Activated naive CD4-positive, alpha-beta T cell treated with anti-CD3 and anti-CD28 coated beads for 36 hours (primary cell): ENCODE measurements at regions of chr14 and their contacts with region 1.

Region 1: DNA sequence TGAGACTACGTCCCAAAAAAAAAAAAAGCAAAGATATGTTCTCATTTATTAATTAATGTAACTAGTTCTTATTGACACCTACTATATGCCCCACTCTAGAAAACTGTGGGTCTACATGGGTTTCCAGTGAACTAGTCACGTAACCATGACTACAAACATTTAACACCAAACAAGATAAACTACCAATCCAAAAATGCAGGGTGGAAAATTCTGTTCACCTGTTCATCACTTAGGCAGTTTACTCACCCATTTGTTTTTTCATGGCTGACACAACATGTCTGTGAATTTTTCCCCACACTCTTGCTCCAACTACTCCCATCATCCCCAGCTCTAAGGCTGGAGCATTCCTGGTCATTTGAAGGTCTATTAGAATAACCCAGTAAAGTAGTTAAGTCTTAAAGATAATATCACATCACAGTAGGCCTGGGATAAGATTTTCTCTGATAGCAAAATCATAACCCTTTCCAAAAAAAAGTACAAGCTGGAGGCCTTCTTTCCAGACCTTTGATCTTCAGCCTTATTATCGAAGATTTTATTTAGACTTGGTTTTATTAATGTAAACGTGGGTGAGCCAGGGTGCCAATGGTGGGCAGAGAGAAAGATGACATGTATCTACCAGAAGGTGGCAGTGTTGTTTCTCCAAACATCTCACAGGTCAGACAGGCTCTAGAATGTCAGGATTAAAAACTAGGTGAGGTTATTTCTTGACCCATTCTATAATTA is 61.6 kb upstream of the DAAM1 start:
- DNase-seq: peak; percentile 24
- H3K4me3 Mint-ChIP-seq: no peak overlapping the region
- H3K27ac Mint-ChIP-seq: no peak overlapping the region
- H3K4me1 Mint-ChIP-seq: no peaks in the 10 kb centered on the region
- H3K27me3 Mint-ChIP-seq: peaks cover 7% of the 10 kb centered on the region

Region 2: GRCh38 chr14:58898655-58899316 is 228.1 kb before region 1 on chr14:
- CTCF ChIA-PET with region 1: no interaction called
- intact Hi-C with region 1: no loop called
- DNase-seq: no peak
- H3K4me3 Mint-ChIP-seq: no peak overlapping the region
- H3K27ac Mint-ChIP-seq: no peak overlapping the region
- H3K4me1 Mint-ChIP-seq: no peaks in the 10 kb centered on the region
- H3K27me3 Mint-ChIP-seq: peaks cover 4% of the 10 kb centered on the region

Region 3: GRCh38 chr14:59028476-59029202 is 98.2 kb before region 1 on chr14:
- CTCF ChIA-PET with region 1: interaction called, 4 read pairs
- intact Hi-C with region 1: loop called (anchors 2 kb)
- DNase-seq: peak; percentile 62
- H3K4me3 Mint-ChIP-seq: no peak overlapping the region
- H3K27ac Mint-ChIP-seq: no peak overlapping the region
- H3K4me1 Mint-ChIP-seq: peaks cover 4% of the 10 kb centered on the region
- H3K27me3 Mint-ChIP-seq: no peaks in the 10 kb centered on the region

Region 4: GRCh38 chr14:59150990-59151389 is 24.1 kb after region 1 on chr14:
- CTCF ChIA-PET with region 1: no interaction called
- intact Hi-C with region 1: no loop called
- DNase-seq: no peak
- H3K4me3 Mint-ChIP-seq: no peak overlapping the region
- H3K27ac Mint-ChIP-seq: no peak overlapping the region
- H3K4me1 Mint-ChIP-seq: peaks cover 6% of the 10 kb centered on the region
- H3K27me3 Mint-ChIP-seq: no peaks in the 10 kb centered on the region

Region 5: DNA sequence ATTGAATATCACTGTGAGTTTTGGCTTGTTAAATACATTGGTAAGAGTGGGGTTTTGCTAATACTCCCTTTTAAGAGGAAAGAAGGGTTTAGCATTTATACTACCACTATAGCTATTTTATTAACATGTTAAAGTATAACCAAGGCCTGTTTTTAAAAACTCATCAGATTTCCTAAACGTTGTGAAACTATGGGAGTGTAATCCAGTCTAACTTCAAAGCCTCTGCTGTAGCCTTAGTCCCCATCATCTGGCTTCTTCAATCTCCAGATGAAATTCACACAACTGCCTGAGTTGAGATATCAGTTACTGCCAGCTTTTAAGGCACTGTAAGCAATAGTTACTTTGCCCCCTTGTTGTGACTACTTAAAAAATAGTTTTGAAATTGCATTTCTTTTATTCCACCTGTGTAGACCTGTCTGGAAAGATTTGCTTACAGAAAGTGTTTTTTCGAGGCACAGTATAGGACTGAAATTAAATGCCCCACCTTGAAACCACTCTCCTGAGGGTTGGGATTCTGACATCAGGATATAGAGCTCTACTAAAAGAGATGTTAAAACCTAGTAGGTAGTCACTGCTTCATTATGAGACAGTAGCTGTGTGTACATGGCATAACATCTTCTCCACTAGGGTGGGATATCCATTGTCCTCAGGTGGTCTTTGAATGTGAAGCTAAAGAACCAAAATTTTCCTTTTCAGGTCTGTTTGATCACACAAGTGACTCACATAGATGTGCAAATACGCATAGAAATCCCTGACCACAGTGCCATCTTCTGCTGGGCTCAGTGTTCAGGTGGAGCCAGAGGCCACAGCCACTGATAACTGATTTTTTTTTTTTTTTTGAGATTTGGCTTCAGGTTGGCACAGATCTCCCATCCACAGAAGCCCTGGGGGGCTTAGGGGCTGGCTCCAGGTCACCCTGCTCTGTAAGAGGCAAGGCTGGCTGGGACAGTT is 187.1 kb after region 1 on chr14:
- CTCF ChIA-PET with region 1: interaction called, 4 read pairs
- intact Hi-C with region 1: loop called (anchors 1 kb)
- DNase-seq: no peak
- H3K4me3 Mint-ChIP-seq: no peak overlapping the region
- H3K27ac Mint-ChIP-seq: no peak overlapping the region
- H3K4me1 Mint-ChIP-seq: no peaks in the 10 kb centered on the region
- H3K27me3 Mint-ChIP-seq: no peaks in the 10 kb centered on the region

Region 6: GRCh38 chr14:59422069-59422881 is 295.4 kb after region 1 on chr14:
- CTCF ChIA-PET with region 1: interaction called, 4 read pairs
- intact Hi-C with region 1: loop called (anchors 1 kb)
- DNase-seq: no peak
- H3K4me3 Mint-ChIP-seq: no peak overlapping the region
- H3K27ac Mint-ChIP-seq: no peak overlapping the region
- H3K4me1 Mint-ChIP-seq: no peaks in the 10 kb centered on the region
- H3K27me3 Mint-ChIP-seq: peaks cover 5% of the 10 kb centered on the region

Region 7: DNA sequence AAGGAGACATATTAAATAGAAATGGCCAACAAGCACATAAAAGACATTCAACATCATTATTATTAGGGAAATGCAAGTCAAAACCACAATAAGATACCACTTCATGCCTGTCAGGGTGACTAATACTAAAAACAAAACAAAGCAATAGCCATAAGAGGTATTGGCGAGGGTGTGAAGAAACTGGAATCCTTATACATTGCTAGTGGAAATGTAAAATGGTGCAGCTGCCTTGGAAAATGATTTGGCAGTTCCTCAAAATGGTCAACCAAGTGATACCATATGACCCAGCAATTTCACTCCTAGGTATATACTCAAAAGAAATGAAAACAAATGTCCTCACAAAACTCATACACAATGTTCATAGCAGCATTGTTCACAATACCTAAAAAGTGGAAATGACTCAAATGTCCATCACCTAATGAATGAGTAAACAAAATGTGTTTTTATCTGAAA is 311.4 kb after region 1 on chr14:
- CTCF ChIA-PET with region 1: interaction called, 34 read pairs
- intact Hi-C with region 1: no loop called
- DNase-seq: no peak
- H3K4me3 Mint-ChIP-seq: no peak overlapping the region
- H3K27ac Mint-ChIP-seq: no peak overlapping the region
- H3K4me1 Mint-ChIP-seq: no peaks in the 10 kb centered on the region
- H3K27me3 Mint-ChIP-seq: peaks cover 3% of the 10 kb centered on the region

Region 8: DNA sequence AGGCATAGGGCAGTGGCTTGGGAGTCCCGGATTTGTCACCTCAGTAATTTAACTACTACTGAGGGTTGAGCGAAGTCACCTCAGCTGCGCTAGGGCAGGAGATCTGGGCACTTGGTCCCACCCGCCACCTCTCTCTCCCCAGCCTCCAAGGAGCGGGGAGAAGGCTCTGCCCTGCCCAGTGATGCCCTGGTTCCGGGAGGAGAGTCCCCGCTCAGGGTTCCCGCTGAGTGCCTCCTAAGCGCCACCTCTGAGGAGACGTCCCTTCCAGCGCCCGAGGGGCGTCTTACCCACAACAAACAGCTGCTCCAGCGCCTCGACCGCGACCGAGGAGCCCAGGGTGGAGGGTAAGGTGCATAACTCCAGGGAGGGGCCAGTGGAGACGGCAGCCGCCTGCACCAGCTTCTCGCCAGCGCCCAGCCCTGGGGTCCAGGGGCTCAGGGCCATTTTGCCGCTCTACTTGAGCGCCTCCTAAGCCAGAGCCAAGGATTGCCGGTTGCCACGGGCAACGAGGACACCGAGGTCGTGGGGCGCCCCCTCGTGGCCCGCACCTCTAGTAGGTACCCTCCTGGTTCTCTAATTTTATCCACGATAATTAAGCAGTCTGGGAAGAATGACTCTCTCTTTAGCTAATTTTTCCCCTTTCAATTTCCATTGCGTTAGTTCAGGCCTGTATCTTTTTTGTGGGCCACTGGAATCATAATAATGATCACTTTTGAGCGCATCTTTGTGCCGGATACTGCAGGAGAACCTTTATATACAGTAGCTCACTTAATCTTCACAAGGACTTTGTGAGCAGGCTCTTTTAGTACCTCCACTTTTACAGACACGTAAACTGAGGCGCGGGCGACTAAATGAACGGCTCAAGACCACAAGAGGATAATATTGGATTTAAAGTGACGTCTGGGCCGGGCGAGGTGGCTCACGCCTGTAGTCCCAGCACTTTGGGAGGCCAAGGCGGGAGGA is 449.7 kb after region 1 on chr14 and contains the start of gene CCDC175:
- CTCF ChIA-PET with region 1: interaction called, 8 read pairs
- intact Hi-C with region 1: loop called (anchors 1 kb)
- DNase-seq: peak; percentile 89
- H3K4me3 Mint-ChIP-seq: peak within 1 kb of the TSS; percentile 65
- H3K27ac Mint-ChIP-seq: no peak within 1 kb of the TSS
- H3K4me1 Mint-ChIP-seq: peaks cover 5% of the 10 kb centered on the region
- H3K27me3 Mint-ChIP-seq: peaks cover 3% of the 10 kb centered on the region
- total RNA-seq, gene CCDC175: not detected